ENCODE measurements at regions of chr11 and their contacts with region 1.

Region 1: GRCh38 chr11:45771566-45772448 is 33.1 kb upstream of the SLC35C1 start:
- DNase-seq: peak; percentile 95
- H3K4me3 ChIP-seq: peak overlapping the region; percentile 45 to 69
- H3K27ac ChIP-seq: no peak overlapping the region
- H3K4me1 ChIP-seq: peaks cover 0 to 7% of the 10 kb centered on the region in 2 experiments; a peak in 2 of 4 replicates
- H3K27me3 ChIP-seq: peaks cover 17% of the 10 kb centered on the region; the same call in 1 of the 2 replicates
- CTCF ChIP-seq: peak; percentile 91
- EP300 ChIP-seq: no peak
- RAD21 ChIP-seq: peak; percentile 95

Region 2: DNA sequence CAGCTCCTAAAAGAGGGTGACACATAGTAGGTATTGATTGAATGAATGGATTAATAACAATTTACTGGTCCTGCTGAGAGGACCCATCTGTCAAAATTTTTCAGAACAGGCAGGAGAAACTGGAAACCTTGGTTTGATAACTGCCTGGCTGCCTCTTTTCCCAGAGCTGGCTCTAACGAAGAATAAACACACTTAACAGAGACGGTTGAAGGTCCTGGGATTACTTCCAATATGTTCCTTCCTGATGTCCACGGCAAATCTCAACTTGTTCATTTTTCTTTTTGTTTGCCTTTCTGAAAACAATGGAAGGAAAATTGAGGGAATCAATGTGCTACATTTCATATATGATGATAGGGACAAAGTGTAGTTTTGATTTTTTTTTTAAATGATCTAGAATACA is 409.2 kb before region 1 on chr11:
- CTCF ChIA-PET with region 1: interaction called, 252 read pairs
- POLR2A ChIA-PET with region 1: no interaction called
- DNase-seq: no peak
- H3K4me3 ChIP-seq: no peak overlapping the region
- H3K27ac ChIP-seq: no peak overlapping the region
- H3K4me1 ChIP-seq: peaks cover 0 to 8% of the 10 kb centered on the region in 2 experiments; a peak in 2 of 4 replicates
- H3K27me3 ChIP-seq: peaks cover 8% of the 10 kb centered on the region; the same call in 1 of the 2 replicates
- CTCF ChIP-seq: no peak
- EP300 ChIP-seq: no peak
- RAD21 ChIP-seq: no peak

Region 3: GRCh38 chr11:45399166-45399565 is 372.6 kb before region 1 on chr11:
- CTCF ChIA-PET with region 1: interaction called, 21 read pairs
- POLR2A ChIA-PET with region 1: no interaction called
- DNase-seq: no peak
- H3K4me3 ChIP-seq: no peak overlapping the region
- H3K27ac ChIP-seq: no peak overlapping the region
- H3K4me1 ChIP-seq: peaks cover 6 to 19% of the 10 kb centered on the region in 2 experiments; a peak in 3 of 4 replicates
- H3K27me3 ChIP-seq: no peaks in the 10 kb centered on the region
- CTCF ChIP-seq: no peak
- EP300 ChIP-seq: no peak
- RAD21 ChIP-seq: no peak

Region 4: DNA sequence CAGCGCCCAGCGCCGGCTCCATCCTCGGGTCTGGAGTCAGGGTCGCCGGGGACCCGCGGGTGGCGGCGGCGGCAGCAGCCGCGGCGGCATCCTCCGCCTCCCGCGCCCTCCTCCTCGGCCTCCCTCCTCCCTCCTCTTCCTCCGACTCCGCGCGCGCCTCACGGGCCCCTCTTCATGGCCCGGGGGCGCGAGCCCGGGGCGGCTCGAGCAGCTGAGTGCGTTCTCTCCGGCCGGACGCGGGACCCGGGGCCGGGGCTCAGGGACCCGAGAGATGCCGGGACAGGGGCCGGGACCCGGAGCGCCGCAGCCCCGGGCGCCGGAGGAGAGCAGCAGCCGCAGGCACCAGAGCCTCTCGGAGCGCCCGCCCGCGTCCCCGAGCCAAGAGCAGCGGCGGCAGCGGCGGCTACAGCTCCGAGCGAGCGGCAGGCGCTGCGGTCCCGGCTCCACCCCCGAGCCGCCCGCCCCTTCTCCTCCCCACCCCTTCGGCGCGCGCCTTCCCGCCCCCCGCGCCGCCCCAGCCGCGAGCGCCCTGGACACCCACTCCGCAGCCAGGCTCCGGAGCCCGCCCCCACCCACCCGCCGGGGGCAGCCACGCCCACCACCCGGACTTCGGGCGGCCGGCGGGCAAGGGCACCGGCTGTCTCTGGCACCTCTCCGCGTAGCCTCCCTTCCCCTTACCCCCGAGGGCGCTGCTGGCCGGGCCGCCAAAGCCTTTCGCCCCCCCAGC is 106.4 kb before region 1 on chr11 and contains the start of gene CHST1:
- CTCF ChIA-PET with region 1: interaction called, 46 read pairs
- POLR2A ChIA-PET with region 1: no interaction called
- DNase-seq: peak; percentile 90
- H3K4me3 ChIP-seq: peak within 1 kb of the TSS; percentile 63 to 71
- H3K27ac ChIP-seq: no peak within 1 kb of the TSS
- H3K4me1 ChIP-seq: peaks cover 42 to 43% of the 10 kb centered on the region in 2 experiments; a peak in 3 of 4 replicates
- H3K27me3 ChIP-seq: peaks cover 8% of the 10 kb centered on the region
- CTCF ChIP-seq: no peak
- EP300 ChIP-seq: no peak
- RAD21 ChIP-seq: no peak
- polyA plus RNA-seq, gene CHST1: 2.7 and 4.9 TPM in 2 replicates

Region 5: DNA sequence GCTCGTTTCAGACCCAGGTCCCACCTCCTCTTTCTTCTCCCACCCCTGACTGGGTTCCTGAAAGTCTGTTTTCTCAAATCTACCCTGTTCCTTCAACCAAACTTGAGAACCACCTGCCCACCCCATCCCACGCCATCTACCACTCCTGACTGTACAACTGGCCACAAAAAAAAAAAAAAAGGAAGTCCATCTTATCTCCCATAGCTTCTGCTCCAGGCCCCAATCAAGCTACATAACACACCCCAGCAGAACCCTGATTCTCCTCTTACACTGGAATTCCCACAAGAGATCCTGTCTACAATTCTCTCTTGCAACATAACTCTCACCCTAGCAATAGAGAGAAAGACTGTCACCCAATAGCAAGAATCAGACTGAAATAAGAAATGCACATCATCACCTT is 67.2 kb before region 1 on chr11:
- CTCF ChIA-PET with region 1: interaction called, 15 read pairs
- POLR2A ChIA-PET with region 1: no interaction called
- DNase-seq: no peak
- H3K4me3 ChIP-seq: no peak overlapping the region
- H3K27ac ChIP-seq: no peak overlapping the region
- H3K4me1 ChIP-seq: no peaks in the 10 kb centered on the region
- H3K27me3 ChIP-seq: peaks cover 30% of the 10 kb centered on the region; the same call in 1 of the 2 replicates
- CTCF ChIP-seq: no peak
- EP300 ChIP-seq: no peak
- RAD21 ChIP-seq: no peak

Region 6: GRCh38 chr11:45798793-45799441 is 27.1 kb after region 1 on chr11:
- CTCF ChIA-PET with region 1: interaction called, 18 read pairs
- POLR2A ChIA-PET with region 1: no interaction called
- DNase-seq: no peak
- H3K4me3 ChIP-seq: no peak overlapping the region
- H3K27ac ChIP-seq: no peak overlapping the region
- H3K4me1 ChIP-seq: no peaks in the 10 kb centered on the region
- H3K27me3 ChIP-seq: no peaks in the 10 kb centered on the region
- CTCF ChIP-seq: no peak
- EP300 ChIP-seq: no peak
- RAD21 ChIP-seq: no peak

Measured in SK-N-SH (cell line).